Gastrocnemius medialis (tissue), 4 donors: ENCODE measurements at regions of chr6 and their contacts with region 1.

Region 1: GRCh38 chr6:43059168-43060033 is at the starts of genes KLC4 and MRPL2:
- DNase-seq: peak; percentile 99
- ATAC-seq: peak; percentile 94 to 97
- H3K4me3 ChIP-seq: peak within 1 kb of the TSS; percentile 87 to 98 (median 92)
- H3K27ac ChIP-seq: peak within 1 kb of the TSS; percentile 90 to 99 (median 95)
- H3K4me1 ChIP-seq: peaks cover 24 to 30% of the 10 kb centered on the region in 2 donors
- H3K27me3 ChIP-seq: no peaks in the 10 kb centered on the region
- CTCF ChIP-seq: no peak
- POLR2A ChIP-seq: peak; percentile 72 to 88
- total RNA-seq, gene KLC4: 12.2 to 19.3 (median 14.6) TPM
- total RNA-seq, gene MRPL2: 34.1 to 64.9 (median 41.1) TPM

Region 2: DNA sequence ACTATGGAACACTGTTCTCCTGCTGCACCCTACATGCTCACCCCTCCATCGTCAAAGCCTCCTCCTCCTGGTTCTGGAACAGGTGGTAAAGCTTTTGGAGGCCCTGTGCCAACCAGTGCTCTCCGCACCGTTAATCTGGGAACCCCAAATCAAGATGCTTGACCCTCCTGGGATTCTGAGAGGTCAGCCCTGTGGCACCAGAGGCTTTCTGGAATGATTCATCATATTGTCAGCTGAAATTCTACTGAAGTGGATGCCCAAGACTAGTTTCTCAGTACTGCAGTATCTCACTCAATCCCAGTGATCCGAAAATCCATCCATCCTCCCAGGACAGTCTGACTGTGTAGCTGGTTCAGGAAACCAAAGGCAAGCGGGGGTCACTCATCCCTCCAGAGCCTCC is 700.4 kb before region 1 on chr6:
- in situ Hi-C with region 1: no loop called
- intact Hi-C with region 1: no loop called
- DNase-seq: no peak
- ATAC-seq: no peak
- H3K4me3 ChIP-seq: no peak overlapping the region
- H3K27ac ChIP-seq: no peak overlapping the region
- H3K4me1 ChIP-seq: no peaks in the 10 kb centered on the region
- H3K27me3 ChIP-seq: no peaks in the 10 kb centered on the region
- CTCF ChIP-seq: no peak
- POLR2A ChIP-seq: no peak

Region 3: DNA sequence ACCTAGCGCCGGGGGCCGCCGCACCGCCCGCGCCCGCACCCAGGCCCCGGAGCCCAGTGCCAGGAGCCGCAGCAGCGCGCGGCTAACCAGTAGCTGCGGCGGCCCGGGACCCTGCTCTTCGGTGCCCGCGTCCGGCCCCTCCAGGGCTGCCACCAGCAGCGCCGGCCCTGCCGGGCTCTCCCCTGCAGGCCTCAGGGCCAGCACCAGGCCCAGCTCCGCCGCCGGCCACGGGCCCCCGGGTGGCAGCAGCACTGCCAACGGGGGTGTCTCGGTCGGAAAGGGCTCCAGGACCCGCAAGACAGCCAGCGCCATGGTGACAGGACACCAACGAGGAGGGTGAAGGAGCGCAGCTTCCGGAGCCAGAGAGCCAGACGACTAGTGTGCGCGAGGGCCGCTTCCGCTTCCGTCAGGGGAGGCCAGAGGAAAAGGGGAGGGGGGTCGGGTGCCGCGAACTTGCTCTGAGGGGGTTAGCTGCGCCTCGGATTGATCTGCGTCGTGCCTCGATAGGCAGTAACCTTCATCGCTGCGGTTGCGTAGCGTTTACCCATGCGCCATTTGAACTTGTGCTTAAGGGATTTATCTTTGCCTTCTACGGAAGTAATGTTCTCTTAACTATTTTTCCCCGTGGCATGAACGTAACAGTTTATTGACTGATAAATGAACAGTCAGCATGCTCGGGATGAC is 80.4 kb before region 1 on chr6 and contains the start of gene PEX6:
- in situ Hi-C with region 1: no loop called
- intact Hi-C with region 1: loop called (anchors 2 kb)
- DNase-seq: peak; percentile 69 to 86
- ATAC-seq: peak; percentile 89 to 92
- H3K4me3 ChIP-seq: peak within 1 kb of the TSS; percentile 72 to 97 (median 81)
- H3K27ac ChIP-seq: peak within 1 kb of the TSS; percentile 85 to 97 (median 92)
- H3K4me1 ChIP-seq: peaks cover 25 to 27% of the 10 kb centered on the region in 2 donors
- H3K27me3 ChIP-seq: no peaks in the 10 kb centered on the region
- CTCF ChIP-seq: no peak
- POLR2A ChIP-seq: peak; percentile 40 to 71
- total RNA-seq, gene PEX6: 7.4 to 45.1 (median 12.6) TPM

Region 4: DNA sequence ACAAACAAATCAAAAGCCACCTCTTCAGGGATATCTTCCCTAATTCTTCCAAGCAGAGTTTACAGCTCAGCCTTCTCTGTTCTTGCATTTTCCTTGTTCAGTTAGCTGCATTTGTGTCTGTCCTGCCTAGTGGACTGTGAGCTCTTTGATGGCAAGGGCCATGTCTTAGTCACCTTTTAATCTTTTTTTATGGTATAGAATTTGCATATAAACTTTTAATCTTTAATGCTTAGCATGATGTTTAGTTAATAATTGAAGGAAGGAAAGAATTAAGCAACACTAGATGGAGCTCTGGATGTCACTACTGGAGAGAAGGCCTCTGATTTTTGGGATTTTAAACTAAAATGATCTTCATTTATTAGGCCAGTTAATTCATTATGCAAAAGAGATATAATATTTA is 62.9 kb before region 1 on chr6:
- in situ Hi-C with region 1: no loop called
- intact Hi-C with region 1: no loop called
- DNase-seq: no peak
- ATAC-seq: no peak
- H3K4me3 ChIP-seq: no peak overlapping the region
- H3K27ac ChIP-seq: no peak overlapping the region
- H3K4me1 ChIP-seq: no peaks in the 10 kb centered on the region
- H3K27me3 ChIP-seq: no peaks in the 10 kb centered on the region
- CTCF ChIP-seq: no peak
- POLR2A ChIP-seq: no peak